BJ (cell line): ENCODE measurements at regions of chr9 and their contacts with region 1.

Region 1: DNA sequence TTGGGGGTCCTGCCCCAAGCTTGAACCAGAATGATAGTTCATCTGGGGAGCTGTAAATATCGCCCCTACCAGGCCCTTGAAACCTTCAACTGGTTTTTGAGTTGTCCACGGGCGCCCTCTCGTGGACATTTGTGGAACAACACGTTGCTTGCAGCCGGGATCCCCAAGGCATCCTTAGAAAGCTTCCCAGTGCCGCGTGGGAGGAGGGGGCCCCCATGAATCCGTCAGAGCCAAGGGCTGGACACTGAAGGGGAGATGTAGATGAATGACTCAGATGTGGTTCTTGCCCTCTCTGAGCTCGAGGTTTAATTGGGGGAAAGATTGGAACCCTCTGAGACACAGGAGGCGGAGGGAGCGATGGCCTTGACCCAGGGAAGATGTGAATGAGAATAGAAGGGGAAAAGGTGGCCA is 31.8 kb upstream of the ORM1 start:
- DNase-seq: no peak
- H3K4me3 ChIP-seq: no peak overlapping the region
- H3K27me3 ChIP-seq: no peaks in the 10 kb centered on the region
- CTCF ChIP-seq: peak; percentile 82

Region 2: GRCh38 chr9:114082017-114082762 is 208.9 kb before region 1 on chr9:
- CTCF ChIA-PET with region 1: interaction called, 46 read pairs
- POLR2A ChIA-PET with region 1: no interaction called
- DNase-seq: peak; percentile 24
- H3K4me3 ChIP-seq: no peak overlapping the region
- H3K27me3 ChIP-seq: peaks cover 4% of the 10 kb centered on the region
- CTCF ChIP-seq: peak; percentile 90

Region 3: GRCh38 chr9:114098016-114098935 is 192.8 kb before region 1 on chr9:
- CTCF ChIA-PET with region 1: interaction called, 10 read pairs
- POLR2A ChIA-PET with region 1: no interaction called
- DNase-seq: no peak
- H3K4me3 ChIP-seq: peak overlapping the region; percentile 46
- H3K27me3 ChIP-seq: peaks cover 18% of the 10 kb centered on the region
- CTCF ChIP-seq: 0 out of 2 replicates have a peak, but pooled peaks have one; percentile 16

Region 4: GRCh38 chr9:114141553-114142402 is 149.3 kb before region 1 on chr9:
- CTCF ChIA-PET with region 1: interaction called, 10 read pairs
- POLR2A ChIA-PET with region 1: no interaction called
- DNase-seq: no peak
- H3K4me3 ChIP-seq: no peak overlapping the region
- H3K27me3 ChIP-seq: peaks cover 32% of the 10 kb centered on the region
- CTCF ChIP-seq: no peak

Region 5: DNA sequence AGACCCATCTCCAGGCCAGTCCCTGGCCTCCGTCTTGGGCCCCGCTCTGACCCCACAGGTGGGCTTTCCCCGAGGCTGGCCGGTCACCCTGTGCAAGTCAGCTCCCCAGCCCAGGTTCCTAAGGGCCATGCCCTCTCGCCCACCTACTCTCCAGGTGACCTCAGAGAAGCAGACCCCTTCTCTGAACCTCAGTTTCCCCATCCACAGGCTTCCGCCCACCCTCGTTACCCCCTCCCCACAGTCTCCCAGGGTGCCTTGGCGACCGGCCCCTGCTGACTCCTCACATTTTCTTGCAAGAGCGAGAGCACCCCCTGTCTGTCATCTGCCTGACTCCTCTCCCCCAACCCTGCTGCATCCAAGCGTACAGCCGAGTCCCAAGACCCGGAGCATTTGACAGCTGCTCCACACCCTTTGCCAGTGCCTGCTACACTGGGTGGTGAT is 19.4 kb before region 1 on chr9:
- CTCF ChIA-PET with region 1: interaction called, 13 read pairs
- POLR2A ChIA-PET with region 1: no interaction called
- DNase-seq: no peak
- H3K4me3 ChIP-seq: no peak overlapping the region
- H3K27me3 ChIP-seq: no peaks in the 10 kb centered on the region
- CTCF ChIP-seq: no peak

Region 6: GRCh38 chr9:114304416-114305188 is 13.5 kb after region 1 on chr9:
- CTCF ChIA-PET with region 1: interaction called, 16 read pairs
- POLR2A ChIA-PET with region 1: no interaction called
- DNase-seq: no peak
- H3K4me3 ChIP-seq: no peak overlapping the region
- H3K27me3 ChIP-seq: no peaks in the 10 kb centered on the region
- CTCF ChIP-seq: no peak

Region 7: GRCh38 chr9:114382699-114383520 is 91.8 kb after region 1 on chr9:
- CTCF ChIA-PET with region 1: no interaction called
- POLR2A ChIA-PET with region 1: no interaction called
- DNase-seq: no peak
- H3K4me3 ChIP-seq: no peak overlapping the region
- H3K27me3 ChIP-seq: no peaks in the 10 kb centered on the region
- CTCF ChIP-seq: peak; percentile 32

Region 8: GRCh38 chr9:114696814-114697544 is 405.9 kb after region 1 on chr9:
- CTCF ChIA-PET with region 1: no interaction called
- POLR2A ChIA-PET with region 1: no interaction called
- DNase-seq: no peak
- H3K4me3 ChIP-seq: no peak overlapping the region
- H3K27me3 ChIP-seq: no peaks in the 10 kb centered on the region
- CTCF ChIP-seq: no peak